PC-3 (cell line): ENCODE measurements at regions of chr12 and their contacts with region 1.

Region 1: DNA sequence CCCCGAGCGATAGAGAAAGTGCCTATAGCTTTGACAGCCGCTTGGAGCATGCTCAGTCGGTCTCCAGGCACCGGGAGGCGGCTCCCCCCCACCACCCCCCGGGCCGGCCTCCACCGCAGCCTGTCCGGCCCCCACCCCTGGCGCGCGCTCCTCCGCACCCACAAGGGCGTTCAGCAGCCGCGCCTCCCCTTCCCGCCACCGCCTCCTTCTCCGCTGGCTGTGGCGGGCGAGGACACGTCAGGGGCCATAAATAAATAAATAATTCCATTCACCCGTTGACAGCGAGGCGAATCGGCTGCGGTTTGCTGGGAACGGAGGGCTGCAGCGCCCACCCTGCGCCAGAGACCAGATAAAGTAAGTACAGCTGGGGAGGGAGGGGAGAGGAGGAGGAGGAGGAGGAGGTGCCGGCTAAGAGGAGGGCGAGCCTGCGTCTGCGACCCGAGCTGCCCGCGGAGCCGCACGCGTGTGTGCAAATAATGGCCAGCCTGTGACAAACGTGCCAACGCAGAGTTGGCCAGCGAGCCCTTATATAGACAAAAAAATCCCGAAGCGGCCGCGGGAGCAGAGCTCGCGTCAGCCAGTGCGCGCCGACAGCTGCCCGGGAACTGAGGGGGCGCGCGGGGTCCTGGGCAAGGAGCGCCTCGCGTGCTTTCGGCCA is at the start of gene SLC16A7:
- DNase-seq: peak; percentile 84
- ATAC-seq: peak; percentile 64
- H3K4me3 ChIP-seq: peak within 1 kb of the TSS; percentile 94
- H3K27ac ChIP-seq: peak within 1 kb of the TSS; percentile 41
- H3K4me1 ChIP-seq: peaks cover 17% of the 10 kb centered on the region
- H3K27me3 ChIP-seq: no peaks in the 10 kb centered on the region
- CTCF ChIP-seq: no peak
- total RNA-seq, gene SLC16A7: 10.4 and 11.4 TPM in 2 replicates

Region 2: GRCh38 chr12:59403259-59403932 is 192.6 kb before region 1 on chr12:
- CTCF ChIA-PET with region 1: no interaction called
- POLR2A ChIA-PET with region 1: no interaction called
- intact Hi-C with region 1: loop called (anchors 2 kb)
- DNase-seq: peak; percentile 77
- ATAC-seq: peak; percentile 77
- H3K4me3 ChIP-seq: peak overlapping the region; percentile 41; the same call in 1 of the 2 replicates
- H3K27ac ChIP-seq: no peak overlapping the region
- H3K4me1 ChIP-seq: peaks cover 10% of the 10 kb centered on the region
- H3K27me3 ChIP-seq: no peaks in the 10 kb centered on the region
- CTCF ChIP-seq: peak; percentile 87

Region 3: GRCh38 chr12:59452259-59452658 is 143.8 kb before region 1 on chr12:
- CTCF ChIA-PET with region 1: no interaction called
- POLR2A ChIA-PET with region 1: no interaction called
- intact Hi-C with region 1: loop called (anchors 2 kb)
- DNase-seq: peak; percentile 86
- ATAC-seq: peak; percentile 94
- H3K4me3 ChIP-seq: no peak overlapping the region
- H3K27ac ChIP-seq: 0 out of 2 replicates have a peak overlapping the region, but pooled peaks have one; percentile 0
- H3K4me1 ChIP-seq: peaks cover 15% of the 10 kb centered on the region
- H3K27me3 ChIP-seq: no peaks in the 10 kb centered on the region
- CTCF ChIP-seq: no peak

Region 4: GRCh38 chr12:59708064-59708463 is 112.1 kb after region 1 on chr12:
- CTCF ChIA-PET with region 1: no interaction called
- POLR2A ChIA-PET with region 1: no interaction called
- intact Hi-C with region 1: loop called (anchors 1 kb)
- DNase-seq: peak; percentile 79
- ATAC-seq: peak; percentile 100
- H3K4me3 ChIP-seq: no peak overlapping the region
- H3K27ac ChIP-seq: no peak overlapping the region
- H3K4me1 ChIP-seq: peaks cover 15% of the 10 kb centered on the region
- H3K27me3 ChIP-seq: no peaks in the 10 kb centered on the region
- CTCF ChIP-seq: no peak

Region 5: DNA sequence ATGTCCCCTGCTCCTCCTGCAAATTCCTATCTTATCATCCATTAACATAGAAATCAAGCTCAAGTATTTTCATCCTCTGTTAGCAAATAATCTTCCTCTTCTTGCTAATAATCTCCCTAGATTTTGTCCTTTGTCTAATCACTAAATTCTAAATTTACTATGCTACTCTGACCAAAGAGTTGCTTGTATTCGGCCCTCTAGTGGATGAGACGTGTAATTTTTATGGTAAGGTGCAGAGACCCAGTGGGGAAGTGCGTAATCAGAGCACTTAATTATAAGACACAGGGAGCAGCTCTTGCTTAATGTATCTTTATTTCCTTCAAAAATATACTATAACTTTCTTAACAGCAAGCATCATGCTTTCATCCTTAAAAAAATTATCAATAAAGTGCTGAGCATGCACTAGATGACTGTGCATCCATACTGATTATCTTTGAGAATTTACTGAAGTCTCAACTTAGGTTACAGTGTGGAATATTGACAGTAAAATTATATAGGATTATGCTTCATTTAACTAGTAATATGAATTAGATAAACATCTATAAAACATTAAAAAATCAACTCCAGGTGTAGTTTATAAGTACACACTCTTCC is 212.4 kb after region 1 on chr12:
- CTCF ChIA-PET with region 1: no interaction called
- POLR2A ChIA-PET with region 1: no interaction called
- intact Hi-C with region 1: loop called (anchors 1 kb)
- DNase-seq: peak; percentile 55
- ATAC-seq: peak; percentile 72; the same call in 1 of the 2 replicates
- H3K4me3 ChIP-seq: no peak overlapping the region
- H3K27ac ChIP-seq: no peak overlapping the region
- H3K4me1 ChIP-seq: peaks cover 4% of the 10 kb centered on the region; the same call in 1 of the 2 replicates
- H3K27me3 ChIP-seq: no peaks in the 10 kb centered on the region
- CTCF ChIP-seq: peak; percentile 88